Activated B cell treated with CpG ODN at 0.5 μM for 24 hours (primary cell): ENCODE measurements at regions of chr1 and their contacts with region 1.

Region 1: GRCh38 chr1:47725992-47726855 is 271.0 kb downstream of the TRABD2B start:
- DNase-seq: no peak
- ATAC-seq: peak; percentile 85
- H3K4me3 Mint-ChIP-seq: peak overlapping the region; percentile 69
- H3K27ac Mint-ChIP-seq: no peak overlapping the region
- H3K4me1 Mint-ChIP-seq: peaks cover 11% of the 10 kb centered on the region
- H3K27me3 Mint-ChIP-seq: peaks cover 47% of the 10 kb centered on the region
- CTCF ChIP-seq: no peak

Region 2: GRCh38 chr1:47179017-47179987 is 546.9 kb before region 1 on chr1:
- CTCF ChIA-PET with region 1: interaction called, 10 read pairs
- POLR2A ChIA-PET with region 1: no interaction called
- intact Hi-C with region 1: loop called (anchors 1 kb)
- DNase-seq: peak; percentile 55
- ATAC-seq: peak; percentile 70
- H3K4me3 Mint-ChIP-seq: peak overlapping the region; percentile 82
- H3K27ac Mint-ChIP-seq: no peak overlapping the region
- H3K4me1 Mint-ChIP-seq: peaks cover 11% of the 10 kb centered on the region
- H3K27me3 Mint-ChIP-seq: peaks cover 32% of the 10 kb centered on the region
- CTCF ChIP-seq: no peak

Region 3: DNA sequence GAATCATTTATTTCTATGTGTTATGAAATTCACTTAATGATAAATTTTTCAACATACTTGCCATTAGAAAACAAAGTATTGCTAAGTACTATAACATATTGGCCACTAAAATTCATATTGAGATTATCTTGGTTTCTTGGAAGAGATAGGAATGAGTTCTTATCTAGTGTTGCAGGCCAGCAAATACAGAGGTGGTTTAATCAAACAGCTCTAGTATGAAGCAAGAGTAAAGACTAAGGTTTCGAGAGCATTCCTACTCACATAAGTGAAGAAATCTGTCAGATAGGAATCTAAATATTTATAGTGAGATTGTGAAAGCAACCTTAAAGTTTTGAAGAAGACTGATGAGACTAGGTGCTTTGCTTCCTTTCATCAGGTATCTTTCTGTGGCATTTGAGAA is 348.1 kb before region 1 on chr1:
- CTCF ChIA-PET with region 1: no interaction called
- POLR2A ChIA-PET with region 1: no interaction called
- intact Hi-C with region 1: no loop called
- DNase-seq: no peak
- ATAC-seq: no peak
- H3K4me3 Mint-ChIP-seq: no peak overlapping the region
- H3K27ac Mint-ChIP-seq: no peak overlapping the region
- H3K4me1 Mint-ChIP-seq: no peaks in the 10 kb centered on the region
- H3K27me3 Mint-ChIP-seq: no peaks in the 10 kb centered on the region
- CTCF ChIP-seq: no peak

Region 4: DNA sequence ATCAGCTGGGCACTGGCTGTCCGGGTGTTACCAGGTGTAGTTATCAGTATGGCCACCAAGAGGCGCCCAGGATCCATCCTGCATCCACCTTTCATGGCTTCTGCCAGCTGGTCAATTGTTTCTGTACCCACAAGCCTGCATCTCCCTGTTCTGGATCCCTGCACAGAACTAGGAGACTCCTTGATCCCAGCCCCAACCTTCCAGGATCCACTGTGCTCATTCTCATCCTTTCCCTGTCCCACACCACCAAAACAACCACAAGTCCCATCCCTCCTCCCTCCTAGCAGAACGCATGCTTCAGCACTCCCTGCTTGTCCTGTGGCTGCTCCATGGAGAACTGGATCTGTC is 337.4 kb before region 1 on chr1:
- CTCF ChIA-PET with region 1: interaction called, 42 read pairs
- POLR2A ChIA-PET with region 1: interaction called, 5 read pairs
- intact Hi-C with region 1: loop called (anchors 1 kb)
- DNase-seq: no peak
- ATAC-seq: no peak
- H3K4me3 Mint-ChIP-seq: no peak overlapping the region
- H3K27ac Mint-ChIP-seq: no peak overlapping the region
- H3K4me1 Mint-ChIP-seq: no peaks in the 10 kb centered on the region
- H3K27me3 Mint-ChIP-seq: peaks cover 14% of the 10 kb centered on the region
- CTCF ChIP-seq: no peak

Region 5: GRCh38 chr1:47432071-47433036 is 293.9 kb before region 1 on chr1:
- CTCF ChIA-PET with region 1: interaction called, 10 read pairs
- POLR2A ChIA-PET with region 1: interaction called, 6 read pairs
- intact Hi-C with region 1: loop called (anchors 1 kb)
- DNase-seq: no peak
- ATAC-seq: no peak
- H3K4me3 Mint-ChIP-seq: peak overlapping the region; percentile 50
- H3K27ac Mint-ChIP-seq: no peak overlapping the region
- H3K4me1 Mint-ChIP-seq: peaks cover 47% of the 10 kb centered on the region
- H3K27me3 Mint-ChIP-seq: peaks cover 45% of the 10 kb centered on the region
- CTCF ChIP-seq: no peak

Region 6: DNA sequence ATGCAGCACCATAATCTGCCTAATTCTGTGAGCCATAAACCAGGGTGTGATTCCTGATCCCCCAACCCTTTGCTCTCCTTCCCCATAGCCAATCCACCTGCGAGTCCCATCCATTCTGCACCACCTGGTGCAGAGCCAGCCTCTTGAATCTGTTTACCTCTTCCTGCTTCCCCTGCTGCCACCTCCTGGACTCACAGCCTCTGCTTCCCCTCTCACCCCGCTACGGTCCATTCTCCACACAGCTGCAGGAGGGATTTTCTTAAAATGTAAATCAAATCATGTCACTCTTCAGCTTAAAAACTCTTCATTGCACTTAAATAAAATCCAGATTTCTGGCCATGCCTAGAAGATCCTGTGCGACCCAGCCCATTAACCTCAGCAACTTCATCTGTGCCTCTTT is 101.7 kb before region 1 on chr1:
- CTCF ChIA-PET with region 1: no interaction called
- POLR2A ChIA-PET with region 1: no interaction called
- intact Hi-C with region 1: no loop called
- DNase-seq: no peak
- ATAC-seq: no peak
- H3K4me3 Mint-ChIP-seq: no peak overlapping the region
- H3K27ac Mint-ChIP-seq: no peak overlapping the region
- H3K4me1 Mint-ChIP-seq: no peaks in the 10 kb centered on the region
- H3K27me3 Mint-ChIP-seq: peaks cover 4% of the 10 kb centered on the region
- CTCF ChIP-seq: no peak

Region 7: DNA sequence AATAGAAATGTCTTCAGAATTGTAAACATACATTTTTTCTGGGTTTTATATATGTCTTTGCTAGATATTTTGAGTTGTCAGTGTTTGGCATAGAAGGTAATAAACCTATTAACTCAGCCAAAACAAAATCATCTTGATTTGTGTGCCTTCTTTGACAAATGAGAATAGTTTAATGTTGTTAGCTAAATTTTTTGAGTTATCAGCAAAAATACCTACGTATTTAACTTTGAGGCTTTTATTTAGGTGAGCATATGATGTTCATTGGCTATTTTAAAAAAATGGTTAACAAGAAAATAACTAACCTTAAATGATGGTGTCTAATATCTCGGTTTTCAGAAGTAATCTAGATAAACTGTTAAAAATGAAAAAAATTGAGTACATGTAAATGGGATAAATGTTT is 413.1 kb after region 1 on chr1:
- CTCF ChIA-PET with region 1: no interaction called
- POLR2A ChIA-PET with region 1: no interaction called
- intact Hi-C with region 1: no loop called
- DNase-seq: no peak
- ATAC-seq: no peak
- H3K4me3 Mint-ChIP-seq: no peak overlapping the region
- H3K27ac Mint-ChIP-seq: no peak overlapping the region
- H3K4me1 Mint-ChIP-seq: no peaks in the 10 kb centered on the region
- H3K27me3 Mint-ChIP-seq: peaks cover 16% of the 10 kb centered on the region
- CTCF ChIP-seq: no peak